PC-3 (cell line): ENCODE measurements at regions of chr11 and their contacts with region 1.

Region 1: GRCh38 chr11:11230802-11231562 is 122.1 kb downstream of the CSNK2A3 start:
- DNase-seq: peak; percentile 40
- ATAC-seq: no peak
- H3K4me3 ChIP-seq: no peak overlapping the region
- H3K27ac ChIP-seq: no peak overlapping the region
- H3K4me1 ChIP-seq: peaks cover 6% of the 10 kb centered on the region; the same call in 1 of the 2 replicates
- H3K27me3 ChIP-seq: peaks cover 11% of the 10 kb centered on the region
- CTCF ChIP-seq: peak; percentile 60

Region 2: DNA sequence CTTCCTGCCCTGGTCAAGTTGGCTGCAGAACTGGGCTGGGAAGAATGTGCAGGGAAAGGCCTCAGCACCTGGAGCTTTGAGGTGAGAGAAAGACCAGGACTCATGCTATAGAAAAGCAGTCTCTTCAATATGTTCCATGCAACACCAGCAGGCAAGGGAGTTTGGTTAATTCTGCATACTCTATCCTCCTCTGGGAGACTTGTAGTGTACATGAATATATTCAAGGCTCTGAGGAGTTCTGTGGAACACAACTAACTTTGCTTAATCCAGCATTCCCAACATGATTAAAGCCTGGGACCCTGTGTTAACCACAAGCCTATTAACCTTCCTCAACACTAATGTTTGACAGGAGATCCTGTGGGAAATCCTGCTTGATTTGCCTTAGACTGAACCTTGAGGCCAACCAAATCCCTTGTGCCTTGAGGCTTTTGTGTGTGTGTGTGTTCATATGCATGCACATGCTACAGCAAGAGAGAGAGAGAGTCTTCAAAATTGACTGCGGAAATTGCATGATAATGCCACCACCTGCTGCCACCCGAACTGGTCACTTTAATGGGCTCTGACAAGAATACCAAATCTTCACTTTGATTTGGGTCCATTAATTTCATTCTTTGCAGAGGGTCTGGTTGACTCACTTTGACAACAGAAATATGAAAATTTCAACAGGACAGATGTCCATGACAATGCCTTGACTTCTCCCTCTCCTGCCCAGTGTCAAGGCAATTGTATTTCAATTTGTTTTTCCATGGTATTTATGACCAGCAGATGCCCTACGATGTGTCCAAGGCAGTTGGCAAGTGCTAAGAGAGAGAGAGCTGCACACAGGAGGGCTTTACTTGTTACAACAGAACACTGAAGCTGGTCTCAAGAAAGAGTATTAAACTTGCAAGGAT is 134.9 kb before region 1 on chr11:
- CTCF ChIA-PET with region 1: interaction called, 14 read pairs
- POLR2A ChIA-PET with region 1: no interaction called
- intact Hi-C with region 1: no loop called
- DNase-seq: no peak
- ATAC-seq: no peak
- H3K4me3 ChIP-seq: no peak overlapping the region
- H3K27ac ChIP-seq: no peak overlapping the region
- H3K4me1 ChIP-seq: no peaks in the 10 kb centered on the region
- H3K27me3 ChIP-seq: peaks cover 20% of the 10 kb centered on the region
- CTCF ChIP-seq: no peak

Region 3: GRCh38 chr11:11178671-11179638 is 52.0 kb before region 1 on chr11:
- CTCF ChIA-PET with region 1: no interaction called
- POLR2A ChIA-PET with region 1: no interaction called
- intact Hi-C with region 1: no loop called
- DNase-seq: peak; percentile 73
- ATAC-seq: peak; percentile 99
- H3K4me3 ChIP-seq: no peak overlapping the region
- H3K27ac ChIP-seq: no peak overlapping the region
- H3K4me1 ChIP-seq: 0 out of 2 replicates have a peak, but pooled peaks cover 6% of the 10 kb centered on the region
- H3K27me3 ChIP-seq: peaks cover 19% of the 10 kb centered on the region
- CTCF ChIP-seq: no peak

Region 4: GRCh38 chr11:11217929-11218628 is 12.9 kb before region 1 on chr11:
- CTCF ChIA-PET with region 1: no interaction called
- POLR2A ChIA-PET with region 1: interaction called, 16 read pairs
- intact Hi-C with region 1: no loop called
- DNase-seq: peak; percentile 20
- ATAC-seq: peak; percentile 64
- H3K4me3 ChIP-seq: no peak overlapping the region
- H3K27ac ChIP-seq: no peak overlapping the region
- H3K4me1 ChIP-seq: no peaks in the 10 kb centered on the region
- H3K27me3 ChIP-seq: no peaks in the 10 kb centered on the region
- CTCF ChIP-seq: no peak